GM12878 (cell line): ENCODE measurements at regions of chr10 and their contacts with region 1.

Region 1: GRCh38 chr10:110354322-110354766 is 49.6 kb upstream of the SMNDC1 start:
- DNase-seq: peak; percentile 58
- ATAC-seq: peak; percentile 59
- H3K4me3 ChIP-seq: no peak overlapping the region
- H3K27ac ChIP-seq: peak overlapping the region; percentile 100
- H3K4me1 ChIP-seq: peaks cover 54% of the 10 kb centered on the region
- H3K27me3 ChIP-seq: no peaks in the 10 kb centered on the region
- CTCF ChIP-seq: peak; percentile 80 to 88 (median 87)
- EP300 ChIP-seq: no peak
- POLR2A ChIP-seq: no peak
- RAD21 ChIP-seq: peak; percentile 81

Region 2: DNA sequence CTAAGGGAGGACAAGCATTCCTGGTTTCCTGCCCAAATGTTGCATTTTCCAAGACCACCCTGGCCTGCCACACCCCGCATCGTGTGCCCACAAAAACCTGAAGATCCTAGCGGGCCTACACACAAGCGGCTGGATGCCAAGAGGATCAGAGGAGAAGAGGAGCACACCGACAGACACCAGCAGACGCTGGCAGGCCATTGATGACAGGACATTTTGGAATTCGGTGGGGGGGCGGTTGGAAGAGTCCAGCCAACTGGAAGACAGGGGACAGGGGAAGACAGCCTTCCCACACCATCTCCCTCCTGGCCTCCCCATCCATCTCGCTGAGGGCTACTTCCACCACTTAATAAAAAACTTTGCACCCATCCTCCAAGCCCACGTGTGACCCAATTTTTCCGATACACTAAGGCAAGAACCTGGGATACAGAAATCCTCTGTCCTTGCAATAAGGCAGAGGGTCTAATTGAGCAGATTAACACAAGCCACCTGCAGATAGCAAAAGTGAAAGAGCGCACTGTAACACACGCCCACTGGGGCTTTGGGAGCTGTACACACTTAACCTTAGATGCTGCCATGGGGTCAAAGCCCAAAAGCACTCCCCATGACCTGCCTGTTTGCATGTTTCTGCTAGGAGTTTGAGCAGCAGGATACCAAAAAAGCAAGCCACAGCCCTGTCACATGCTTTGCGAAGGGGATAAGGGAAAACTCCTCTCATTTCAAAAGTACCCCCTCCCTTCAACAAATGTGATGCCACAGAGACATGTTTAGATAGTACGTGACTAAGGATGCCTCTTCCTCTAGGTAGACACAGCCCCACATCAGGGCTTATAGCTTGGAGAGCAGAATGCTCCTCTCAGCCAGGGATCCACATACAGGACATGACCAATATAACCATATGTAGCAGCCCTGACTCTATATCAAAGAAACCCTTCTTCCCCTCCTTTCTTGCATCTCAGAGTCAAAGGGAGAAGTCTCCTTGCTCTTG is 36.2 kb before region 1 on chr10:
- CTCF ChIA-PET with region 1: interaction called, 66 read pairs
- POLR2A ChIA-PET with region 1: interaction called, 7 read pairs
- RAD21 ChIA-PET with region 1: interaction called, 122 read pairs
- SMC1A ChIA-PET with region 1: interaction called, 88 read pairs
- in situ Hi-C with region 1: no loop called
- intact Hi-C with region 1: no loop called
- DNase-seq: no peak
- ATAC-seq: peak; percentile 84
- H3K4me3 ChIP-seq: no peak overlapping the region
- H3K27ac ChIP-seq: peak overlapping the region; percentile 17
- H3K4me1 ChIP-seq: peaks cover 5% of the 10 kb centered on the region; the same call in 1 of the 2 replicates
- H3K27me3 ChIP-seq: no peaks in the 10 kb centered on the region
- CTCF ChIP-seq: no peak
- EP300 ChIP-seq: no peak
- POLR2A ChIP-seq: no peak
- RAD21 ChIP-seq: no peak

Region 3: DNA sequence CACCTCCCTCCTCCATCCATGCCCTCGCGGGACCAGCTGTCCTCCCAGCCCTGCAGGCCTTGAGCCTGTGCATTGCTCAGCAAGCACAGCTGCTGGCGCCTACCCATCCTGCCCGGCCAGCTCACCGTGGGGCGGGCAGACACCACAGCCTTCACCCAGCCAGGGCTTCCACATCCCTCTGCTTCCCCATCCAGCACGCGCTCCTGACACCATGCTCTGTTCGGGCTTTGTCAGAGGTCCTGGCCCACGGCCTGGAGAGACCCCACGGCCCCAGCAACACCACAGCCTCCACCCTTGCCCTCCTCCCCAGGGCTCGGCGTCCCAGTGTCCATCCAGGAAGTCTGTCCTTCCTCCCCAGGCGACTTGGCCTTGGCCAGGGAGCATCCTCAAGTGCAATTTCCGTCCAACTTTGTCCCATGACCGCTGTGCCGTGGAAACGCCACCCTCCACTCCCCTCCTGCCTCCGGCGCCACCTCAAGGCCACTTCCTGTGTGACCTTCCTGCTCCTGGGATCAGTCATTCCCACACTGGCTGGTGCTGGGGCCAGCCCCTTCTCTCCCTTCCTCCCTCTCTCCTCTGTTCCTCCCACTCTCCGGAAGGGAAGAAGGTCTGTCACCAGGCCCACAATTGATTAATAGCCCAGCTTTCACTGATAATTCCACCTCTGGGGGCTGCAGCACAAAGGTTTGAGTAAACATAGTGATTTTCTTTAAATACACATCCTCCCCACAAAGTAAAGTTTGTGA is 21.9 kb after region 1 on chr10:
- CTCF ChIA-PET with region 1: interaction called, 3 read pairs
- POLR2A ChIA-PET with region 1: no interaction called
- RAD21 ChIA-PET with region 1: interaction called, 7 read pairs
- SMC1A ChIA-PET with region 1: interaction called, 11 read pairs
- in situ Hi-C with region 1: no loop called
- intact Hi-C with region 1: no loop called
- DNase-seq: no peak
- ATAC-seq: no peak
- H3K4me3 ChIP-seq: no peak overlapping the region
- H3K27ac ChIP-seq: no peak overlapping the region
- H3K4me1 ChIP-seq: peaks cover 11% of the 10 kb centered on the region
- H3K27me3 ChIP-seq: no peaks in the 10 kb centered on the region
- CTCF ChIP-seq: no peak
- EP300 ChIP-seq: no peak
- POLR2A ChIP-seq: no peak
- RAD21 ChIP-seq: no peak

Region 4: DNA sequence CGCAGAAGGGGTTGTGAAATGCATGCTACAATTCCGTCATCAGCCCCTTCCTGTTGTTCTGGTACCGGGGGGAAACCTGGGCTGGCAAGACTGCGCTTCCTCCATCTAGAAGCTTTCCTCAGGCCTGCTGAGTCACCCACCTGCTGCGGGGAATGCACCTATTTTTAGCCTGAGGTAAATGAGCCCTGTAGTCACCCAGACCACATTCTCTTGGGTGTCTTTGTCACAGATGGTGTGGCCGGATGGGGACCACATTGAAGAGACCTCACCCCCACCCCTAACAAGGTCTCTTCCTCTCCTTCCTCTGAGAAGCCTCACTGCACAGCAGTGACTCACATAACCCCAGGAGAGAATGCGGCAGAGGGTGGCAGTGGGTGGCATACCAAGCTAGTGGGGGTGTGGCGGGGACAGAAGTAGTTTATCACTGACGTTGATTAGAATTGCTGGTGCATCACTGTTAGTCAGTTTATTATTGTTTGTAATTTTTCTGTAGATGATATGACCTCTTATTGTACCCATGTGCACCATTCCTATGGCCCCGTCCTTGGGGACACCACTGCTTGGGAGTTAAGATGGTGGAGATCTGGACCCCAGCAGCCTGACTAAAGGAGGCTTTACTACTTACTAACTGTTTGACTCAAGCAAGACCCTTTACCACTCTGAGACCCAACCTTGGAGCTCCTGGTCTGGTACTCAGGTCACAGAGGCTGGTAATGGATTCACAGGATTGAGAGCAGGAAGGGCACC is 60.4 kb after region 1 on chr10:
- CTCF ChIA-PET with region 1: interaction called, 124 read pairs
- POLR2A ChIA-PET with region 1: interaction called, 90 read pairs
- RAD21 ChIA-PET with region 1: interaction called, 241 read pairs
- SMC1A ChIA-PET with region 1: interaction called, 283 read pairs
- in situ Hi-C with region 1: loop called (anchors 5 kb)
- intact Hi-C with region 1: loop called (anchors 1 kb)
- DNase-seq: peak; percentile 99
- ATAC-seq: peak; percentile 83
- H3K4me3 ChIP-seq: no peak overlapping the region
- H3K27ac ChIP-seq: peak overlapping the region; percentile 93
- H3K4me1 ChIP-seq: peaks cover 69% of the 10 kb centered on the region
- H3K27me3 ChIP-seq: no peaks in the 10 kb centered on the region
- CTCF ChIP-seq: no peak
- EP300 ChIP-seq: peak; percentile 97 to 99
- POLR2A ChIP-seq: peak; percentile 49; the same call in 1 of the 2 replicates
- RAD21 ChIP-seq: peak; percentile 38

Region 5: DNA sequence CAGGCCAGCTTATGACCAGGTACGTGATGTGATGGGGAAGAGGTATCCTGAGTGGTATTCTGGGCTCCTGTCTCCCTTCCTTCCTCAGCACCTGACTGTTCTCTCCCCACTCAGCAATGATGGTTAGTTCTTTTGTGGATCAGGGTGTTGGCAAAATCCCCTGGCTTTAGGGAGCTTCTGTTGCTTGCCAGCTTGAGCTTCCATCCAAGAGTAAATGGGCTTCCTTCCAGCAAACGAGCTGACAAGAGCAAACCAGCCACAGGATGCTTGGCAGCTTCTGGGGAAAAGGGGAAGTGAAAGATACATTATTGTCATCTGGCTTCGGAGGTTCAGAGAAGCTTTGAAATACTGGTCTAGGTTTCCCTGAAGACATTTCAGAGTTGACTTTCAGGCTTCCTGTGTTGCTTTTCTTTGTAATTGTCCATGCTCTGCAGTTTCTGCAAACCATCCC is 148.5 kb after region 1 on chr10:
- CTCF ChIA-PET with region 1: interaction called, 251 read pairs
- POLR2A ChIA-PET with region 1: interaction called, 102 read pairs
- RAD21 ChIA-PET with region 1: interaction called, 325 read pairs
- SMC1A ChIA-PET with region 1: interaction called, 261 read pairs
- in situ Hi-C with region 1: loop called (anchors 5 kb)
- intact Hi-C with region 1: loop called (anchors 1 kb)
- DNase-seq: peak; percentile 93
- ATAC-seq: peak; percentile 35
- H3K4me3 ChIP-seq: peak overlapping the region; percentile 95
- H3K27ac ChIP-seq: peak overlapping the region; percentile 91
- H3K4me1 ChIP-seq: peaks cover 49% of the 10 kb centered on the region
- H3K27me3 ChIP-seq: no peaks in the 10 kb centered on the region
- CTCF ChIP-seq: no peak
- EP300 ChIP-seq: peak; percentile 82 to 93; a peak in 3 of 4 replicates
- POLR2A ChIP-seq: peak; percentile 49
- RAD21 ChIP-seq: peak; percentile 21; the same call in 1 of the 2 replicates

Region 6: GRCh38 chr10:110547139-110547761 is 192.9 kb after region 1 on chr10:
- CTCF ChIA-PET with region 1: interaction called, 146 read pairs
- POLR2A ChIA-PET with region 1: interaction called, 19 read pairs
- RAD21 ChIA-PET with region 1: interaction called, 108 read pairs
- SMC1A ChIA-PET with region 1: interaction called, 191 read pairs
- in situ Hi-C with region 1: loop called (anchors 5 kb)
- intact Hi-C with region 1: loop called (anchors 1 kb)
- DNase-seq: no peak
- ATAC-seq: peak; percentile 89
- H3K4me3 ChIP-seq: no peak overlapping the region
- H3K27ac ChIP-seq: no peak overlapping the region
- H3K4me1 ChIP-seq: peaks cover 5% of the 10 kb centered on the region; the same call in 1 of the 2 replicates
- H3K27me3 ChIP-seq: peaks cover 0 to 2% of the 10 kb centered on the region in 2 experiments; a peak in 1 of 4 replicates
- CTCF ChIP-seq: peak; percentile 72 to 83 (median 73)
- EP300 ChIP-seq: no peak
- POLR2A ChIP-seq: no peak
- RAD21 ChIP-seq: peak; percentile 95